CD8-positive, alpha-beta T cell (primary cell): ENCODE measurements at regions of chr4 and their contacts with region 1.

Region 1: GRCh38 chr4:98612318-98613250 is 45.8 kb downstream of the TSPAN5 start:
- DNase-seq: no peak
- ATAC-seq: no peak
- H3K4me3 ChIP-seq: no peak overlapping the region
- H3K4me3 Mint-ChIP-seq: peak overlapping the region; percentile 10
- H3K27ac ChIP-seq: no peak overlapping the region
- H3K27ac Mint-ChIP-seq: no peak overlapping the region
- H3K4me1 ChIP-seq: peaks cover 11% of the 10 kb centered on the region
- H3K4me1 Mint-ChIP-seq: peaks cover 56% of the 10 kb centered on the region
- H3K27me3 ChIP-seq: no peaks in the 10 kb centered on the region
- H3K27me3 Mint-ChIP-seq: no peaks in the 10 kb centered on the region
- CTCF ChIP-seq: no peak

Region 2: DNA sequence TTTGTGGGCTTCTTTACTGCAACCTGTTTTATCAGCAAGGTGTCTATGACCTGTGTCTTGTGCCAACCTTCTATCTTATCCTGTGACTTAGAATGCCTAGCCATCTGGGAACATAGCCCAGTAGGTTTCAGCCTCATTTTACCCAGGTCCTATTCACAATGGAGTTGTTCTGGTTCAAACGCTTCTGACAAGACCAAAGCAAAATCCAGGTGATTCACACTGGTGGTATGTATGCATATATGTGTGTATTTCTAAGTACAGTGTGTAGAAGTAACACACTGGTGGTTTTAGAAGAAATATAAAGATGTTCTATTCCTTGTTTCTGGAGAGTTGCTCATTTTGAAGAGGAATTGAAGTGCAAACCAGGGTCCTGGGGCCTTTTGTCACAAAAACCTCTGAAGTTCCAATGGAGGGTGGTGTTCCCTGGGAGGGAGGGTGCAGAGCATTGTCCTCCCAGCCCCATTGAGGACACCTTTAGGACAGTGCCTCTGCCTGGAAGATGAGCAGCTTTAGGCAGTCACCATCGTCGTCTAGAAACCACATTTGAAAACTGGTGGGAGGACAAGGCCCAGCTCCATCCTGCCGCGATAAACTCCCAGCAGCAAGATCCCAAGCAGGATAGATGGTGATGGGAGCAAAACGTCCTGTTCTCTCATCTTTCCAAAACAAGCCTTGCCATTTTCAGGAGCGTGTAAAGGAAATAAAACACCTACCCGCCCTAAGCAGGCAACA is 145.6 kb before region 1 on chr4:
- CTCF ChIA-PET with region 1: no interaction called
- POLR2A ChIA-PET with region 1: no interaction called
- intact Hi-C with region 1: no loop called
- DNase-seq: no peak
- ATAC-seq: no peak
- H3K4me3 ChIP-seq: no peak overlapping the region
- H3K4me3 Mint-ChIP-seq: peak overlapping the region; percentile 77
- H3K27ac ChIP-seq: no peak overlapping the region
- H3K27ac Mint-ChIP-seq: no peak overlapping the region
- H3K4me1 ChIP-seq: peaks cover 14% of the 10 kb centered on the region
- H3K4me1 Mint-ChIP-seq: peaks cover 26% of the 10 kb centered on the region
- H3K27me3 ChIP-seq: no peaks in the 10 kb centered on the region
- H3K27me3 Mint-ChIP-seq: no peaks in the 10 kb centered on the region
- CTCF ChIP-seq: no peak

Region 3: DNA sequence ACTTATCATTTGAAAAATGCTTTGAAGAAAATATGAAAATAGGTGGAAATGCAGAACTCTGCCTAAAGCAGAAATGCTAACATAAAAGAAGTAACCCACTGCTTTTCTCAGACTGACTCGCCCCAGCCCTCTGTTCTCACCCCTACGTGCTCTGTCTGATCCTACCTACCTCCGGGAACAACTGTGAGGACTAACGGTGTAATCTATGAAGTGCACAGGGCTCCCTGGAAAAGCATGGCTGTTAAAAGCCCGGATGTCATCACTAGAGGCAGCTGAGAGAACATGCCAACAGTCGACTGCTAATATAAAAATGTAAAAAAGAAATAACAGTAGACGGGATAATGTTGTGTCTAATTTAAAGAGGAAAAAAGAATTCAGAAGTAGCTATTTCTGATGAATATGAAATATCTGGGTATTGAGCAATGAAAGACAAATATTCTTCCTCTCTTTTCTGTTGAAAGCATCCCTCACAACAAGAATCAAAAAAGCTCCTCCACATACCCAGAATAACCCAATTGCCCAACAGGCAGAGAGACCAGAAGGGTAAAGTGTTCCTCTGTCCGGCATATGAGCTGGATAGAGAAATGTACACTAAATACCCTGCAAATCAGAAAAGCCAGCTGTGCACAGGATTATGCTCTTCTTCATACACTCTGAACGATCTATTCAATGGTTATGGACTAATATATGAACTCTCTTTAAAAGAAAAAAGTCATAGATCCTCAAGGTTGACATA is 84.9 kb before region 1 on chr4:
- CTCF ChIA-PET with region 1: no interaction called
- POLR2A ChIA-PET with region 1: no interaction called
- intact Hi-C with region 1: no loop called
- DNase-seq: no peak
- ATAC-seq: no peak
- H3K4me3 ChIP-seq: no peak overlapping the region
- H3K4me3 Mint-ChIP-seq: no peak overlapping the region
- H3K27ac ChIP-seq: no peak overlapping the region
- H3K27ac Mint-ChIP-seq: no peak overlapping the region
- H3K4me1 ChIP-seq: no peaks in the 10 kb centered on the region
- H3K4me1 Mint-ChIP-seq: peaks cover 25% of the 10 kb centered on the region
- H3K27me3 ChIP-seq: no peaks in the 10 kb centered on the region
- H3K27me3 Mint-ChIP-seq: no peaks in the 10 kb centered on the region
- CTCF ChIP-seq: no peak

Region 4: DNA sequence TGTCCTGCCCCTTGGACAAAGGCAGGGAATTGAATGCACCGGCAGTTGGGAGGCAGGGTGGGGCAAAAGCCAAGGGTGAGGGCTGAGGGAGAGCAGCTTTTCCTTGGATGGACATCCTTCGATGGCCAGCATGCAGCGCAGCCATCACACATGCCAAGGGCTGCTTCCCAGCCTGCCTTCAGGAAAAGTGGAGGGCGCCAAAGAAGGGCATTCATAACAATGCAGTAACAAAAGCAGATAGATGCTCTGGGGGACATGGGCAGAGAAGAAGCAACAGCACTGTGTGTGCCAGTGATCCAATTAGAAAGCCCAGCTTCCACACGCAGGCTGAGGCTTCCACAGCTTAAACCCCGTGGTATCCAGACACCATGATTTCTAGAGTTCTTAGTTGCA is 25.6 kb before region 1 on chr4:
- CTCF ChIA-PET with region 1: no interaction called
- POLR2A ChIA-PET with region 1: no interaction called
- intact Hi-C with region 1: loop called in 1 of 2 experiments (anchors 2 kb)
- DNase-seq: no peak
- ATAC-seq: no peak
- H3K4me3 ChIP-seq: no peak overlapping the region
- H3K4me3 Mint-ChIP-seq: no peak overlapping the region
- H3K27ac ChIP-seq: no peak overlapping the region
- H3K27ac Mint-ChIP-seq: no peak overlapping the region
- H3K4me1 ChIP-seq: no peaks in the 10 kb centered on the region
- H3K4me1 Mint-ChIP-seq: peaks cover 5% of the 10 kb centered on the region
- H3K27me3 ChIP-seq: no peaks in the 10 kb centered on the region
- H3K27me3 Mint-ChIP-seq: no peaks in the 10 kb centered on the region
- CTCF ChIP-seq: no peak

Region 5: DNA sequence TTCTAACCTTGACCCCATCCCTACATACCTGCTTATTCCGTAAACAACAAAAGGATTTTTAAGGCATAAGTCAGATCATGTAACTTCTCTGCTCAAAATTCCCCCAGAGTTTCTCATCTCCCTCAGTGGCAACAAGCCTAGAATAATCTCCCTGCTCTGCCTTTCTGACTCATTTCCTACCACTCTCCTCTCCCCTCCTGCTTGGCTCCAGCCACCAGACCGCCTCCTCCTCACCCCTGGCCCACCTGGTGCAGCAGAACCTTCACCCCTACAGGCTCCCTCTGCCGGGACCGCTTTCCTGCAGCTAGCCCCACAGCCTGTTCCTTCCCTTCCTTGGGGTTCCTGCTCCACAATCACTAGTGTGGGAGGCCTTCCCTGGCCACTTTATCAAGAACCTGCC is 13.8 kb after region 1 on chr4:
- CTCF ChIA-PET with region 1: interaction called, 4 read pairs
- POLR2A ChIA-PET with region 1: no interaction called
- intact Hi-C with region 1: loop called in 1 of 2 experiments (anchors 2 kb)
- DNase-seq: no peak
- ATAC-seq: no peak
- H3K4me3 ChIP-seq: no peak overlapping the region
- H3K4me3 Mint-ChIP-seq: no peak overlapping the region
- H3K27ac ChIP-seq: no peak overlapping the region
- H3K27ac Mint-ChIP-seq: no peak overlapping the region
- H3K4me1 ChIP-seq: peaks cover 17% of the 10 kb centered on the region
- H3K4me1 Mint-ChIP-seq: peaks cover 48% of the 10 kb centered on the region
- H3K27me3 ChIP-seq: no peaks in the 10 kb centered on the region
- H3K27me3 Mint-ChIP-seq: no peaks in the 10 kb centered on the region
- CTCF ChIP-seq: no peak